Posterior vena cava (tissue), 2 donors: ENCODE measurements at regions of chr1 and their contacts with region 1.

Region 1: DNA sequence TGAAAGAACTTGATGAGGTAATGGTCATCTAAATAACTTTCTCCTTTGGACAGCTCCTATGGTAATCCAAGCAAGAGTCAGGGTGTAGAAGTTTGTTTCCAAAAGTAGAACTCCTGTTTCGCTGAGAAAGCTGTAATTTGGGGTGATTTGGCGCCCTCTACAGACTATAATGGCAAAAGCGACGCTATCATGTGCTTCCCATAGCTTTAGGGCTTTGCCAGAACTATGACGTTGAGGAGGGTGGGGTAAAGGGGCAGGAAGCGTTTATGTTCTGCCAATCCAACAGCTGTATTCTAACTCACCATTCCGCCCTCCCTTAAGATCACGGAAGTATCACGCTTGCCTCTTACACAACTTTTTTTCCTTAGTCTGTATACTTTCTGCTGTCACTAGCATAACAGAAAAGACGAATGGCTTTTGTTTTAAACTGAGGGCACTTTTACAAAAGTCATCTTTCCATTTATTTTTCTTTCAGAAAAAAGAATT is at the start of gene FMO4:
- DNase-seq: peak; percentile 83
- total RNA-seq, gene FMO4: 3.0 to 4.6 TPM

Region 2: DNA sequence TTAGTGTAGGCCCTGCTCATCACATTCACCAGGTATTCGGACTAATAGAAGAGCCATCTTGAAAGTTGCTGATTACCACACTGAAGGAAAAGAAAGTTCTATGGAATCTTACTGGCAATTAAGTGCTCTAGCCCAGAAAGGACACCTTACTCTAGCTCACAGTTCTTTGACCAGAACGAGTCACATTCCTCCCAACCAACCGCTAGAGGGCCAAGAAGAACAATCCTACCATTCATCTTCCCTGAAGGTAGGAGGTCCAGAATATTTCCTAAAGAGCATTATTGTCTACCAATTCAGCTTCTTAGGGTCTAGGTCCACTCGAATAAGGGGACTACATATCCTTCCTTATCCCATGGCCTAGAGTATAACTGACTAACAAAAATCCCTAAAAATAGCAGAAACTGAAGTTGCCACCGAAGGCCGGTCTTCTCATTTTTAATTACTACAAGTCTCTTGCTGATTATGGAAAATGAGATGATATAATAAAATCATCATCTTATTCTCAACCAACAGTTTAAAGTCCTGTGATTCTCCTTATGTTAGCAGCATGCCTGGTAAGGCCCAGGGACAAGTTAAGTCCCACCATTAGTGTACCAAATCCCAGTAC is 68.3 kb before region 1 on chr1:
- intact Hi-C with region 1: loop called (anchors 10 kb)
- DNase-seq: no peak

Region 3: GRCh38 chr1:171251042-171251951 is 62.6 kb before region 1 on chr1:
- intact Hi-C with region 1: loop called (anchors 10 kb)
- DNase-seq: no peak

Region 4: DNA sequence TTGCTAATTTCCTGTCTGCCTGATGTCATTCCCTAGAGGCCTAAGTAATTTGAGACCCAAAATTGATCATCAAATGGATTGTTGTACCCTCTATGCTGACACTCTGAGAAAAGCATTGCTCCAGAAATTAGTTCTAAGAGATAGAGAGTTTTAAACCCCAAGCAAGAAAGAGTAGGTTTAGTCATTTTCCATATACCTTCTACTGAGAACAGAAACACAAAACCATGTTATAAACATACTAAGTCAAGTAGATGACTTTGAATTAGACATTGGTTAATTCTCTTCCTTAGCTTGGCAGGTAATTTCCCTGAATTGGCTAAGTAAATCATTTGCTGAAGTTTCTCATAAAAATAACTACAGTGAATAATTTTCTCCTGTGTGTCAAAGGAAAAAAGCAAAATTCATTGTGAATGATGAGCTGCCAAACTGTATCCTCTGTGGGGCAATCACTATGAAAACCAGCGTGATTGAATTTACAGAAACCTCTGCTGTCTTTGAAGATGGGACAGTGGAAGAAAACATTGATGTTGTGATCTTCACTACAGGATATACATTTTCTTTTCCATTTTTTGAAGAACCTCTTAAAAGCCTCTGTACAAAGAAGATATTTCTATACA is 20.3 kb after region 1 on chr1:
- intact Hi-C with region 1: no loop called
- DNase-seq: no peak

Region 5: DNA sequence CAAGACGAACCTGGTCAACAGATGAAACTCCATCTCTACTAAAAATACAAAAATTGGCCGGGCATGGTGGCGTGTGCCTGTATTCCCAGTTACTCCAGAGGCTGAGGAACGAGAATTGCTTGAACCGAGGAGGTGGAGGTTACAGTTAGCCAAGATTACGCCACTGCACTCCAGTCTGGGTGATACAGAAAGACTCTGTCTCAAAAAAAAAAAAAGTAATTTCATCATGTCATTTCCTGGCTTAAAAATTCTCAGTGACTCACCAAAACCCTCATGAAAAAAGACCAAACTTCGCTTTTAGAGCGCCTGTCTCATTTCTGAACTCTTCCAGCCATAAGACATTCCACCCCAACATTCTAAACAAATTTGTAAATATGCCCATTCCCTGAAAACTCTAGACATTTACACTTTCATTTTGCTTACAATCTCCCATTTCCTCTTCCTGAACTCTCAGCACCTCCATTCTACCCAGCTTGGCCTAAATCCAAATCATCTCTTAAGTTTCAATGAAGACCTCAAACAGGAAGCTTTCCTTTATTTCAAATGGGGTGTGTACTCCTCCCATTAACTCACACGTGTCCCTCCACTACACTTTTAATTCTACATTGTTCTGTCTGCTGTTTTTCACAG is 121.0 kb after region 1 on chr1:
- intact Hi-C with region 1: loop called in 1 of 2 experiments (anchors 10 kb)
- DNase-seq: no peak

Region 6: GRCh38 chr1:171530676-171531075 is 216.8 kb after region 1 on chr1:
- intact Hi-C with region 1: no loop called
- DNase-seq: no peak